HepG2 (cell line): ENCODE measurements at regions of chr6 and their contacts with region 1.

Region 1: DNA sequence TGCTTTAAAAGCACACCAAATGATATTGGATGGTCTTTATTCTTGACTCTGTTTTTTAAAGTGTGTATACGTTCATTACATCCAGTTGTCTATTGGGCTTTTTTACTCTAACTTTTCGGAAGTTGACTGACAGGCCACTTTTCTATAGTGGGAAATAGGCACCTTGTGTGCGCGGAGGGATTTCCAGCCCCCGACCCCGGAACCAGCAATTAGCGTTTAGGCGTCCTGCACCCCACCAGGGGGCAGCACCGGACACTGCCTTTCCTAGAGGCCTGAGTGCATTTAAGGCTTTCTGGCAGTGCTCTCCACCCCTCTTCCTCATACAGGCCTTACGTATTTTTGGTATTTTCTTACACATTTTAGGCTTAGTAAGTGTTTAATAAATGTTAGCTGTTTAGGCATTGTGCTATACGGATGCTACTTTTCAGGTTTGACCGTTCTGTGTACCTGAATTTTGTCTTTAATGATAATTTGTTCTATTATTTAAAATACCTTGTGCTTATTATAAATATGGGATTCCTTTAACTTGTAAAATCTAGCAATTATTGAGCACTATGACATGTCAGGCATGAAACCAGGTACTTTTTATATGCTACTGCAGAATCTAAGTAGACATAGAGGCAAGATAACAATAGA is 231.8 kb downstream of the BCKDHB start:
- DNase-seq: peak; percentile 47
- ATAC-seq: peak; percentile 92
- H3K4me3 ChIP-seq: no peak overlapping the region
- H3K27ac ChIP-seq: no peak overlapping the region
- H3K4me1 ChIP-seq: no peaks in the 10 kb centered on the region
- H3K27me3 ChIP-seq: no peaks in the 10 kb centered on the region
- CTCF ChIP-seq: peak; percentile 83
- EP300 ChIP-seq: no peak
- POLR2A ChIP-seq: no peak
- RAD21 ChIP-seq: peak; percentile 61; the same call in 1 of the 2 replicates

Region 2: DNA sequence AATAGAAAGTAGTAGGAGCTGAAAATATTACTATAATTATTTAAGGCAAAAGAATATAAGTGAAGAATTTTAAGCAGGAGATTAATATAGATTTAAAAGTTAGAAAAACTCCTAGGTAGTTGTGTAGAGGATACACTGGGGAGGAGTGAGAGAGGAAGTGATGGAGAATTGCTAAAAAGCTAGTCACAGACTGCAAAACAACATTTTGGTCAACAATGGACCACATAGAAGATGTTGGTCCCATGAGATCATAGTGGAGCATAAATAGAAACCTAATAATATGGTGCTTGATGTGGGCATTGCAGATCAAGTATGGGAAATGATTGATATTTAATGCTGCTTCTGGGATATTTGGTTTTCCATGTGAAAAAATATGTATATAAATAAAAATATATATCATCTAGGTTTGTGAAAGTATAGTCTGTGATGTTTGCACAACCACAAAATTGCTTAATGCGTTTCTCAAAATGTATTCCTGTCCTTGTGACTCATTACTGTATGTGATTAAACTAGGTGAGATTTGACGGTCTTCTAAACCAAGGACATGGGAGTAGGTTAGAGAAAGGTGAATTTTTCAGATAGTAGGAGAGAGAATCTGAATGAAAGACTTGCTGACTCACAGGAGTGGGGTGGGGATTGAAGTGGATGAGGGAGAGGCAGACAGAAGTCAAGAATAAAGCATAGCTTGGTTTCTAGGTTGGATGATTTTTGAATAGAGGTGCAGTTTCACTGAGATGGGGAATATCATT is 57.9 kb before region 1 on chr6:
- CTCF ChIA-PET with region 1: no interaction called
- POLR2A ChIA-PET with region 1: no interaction called
- in situ Hi-C with region 1: no loop called
- intact Hi-C with region 1: no loop called
- DNase-seq: no peak
- ATAC-seq: no peak
- H3K4me3 ChIP-seq: no peak overlapping the region
- H3K27ac ChIP-seq: no peak overlapping the region
- H3K4me1 ChIP-seq: no peaks in the 10 kb centered on the region
- H3K27me3 ChIP-seq: no peaks in the 10 kb centered on the region
- CTCF ChIP-seq: no peak
- EP300 ChIP-seq: no peak
- POLR2A ChIP-seq: no peak
- RAD21 ChIP-seq: no peak

Region 3: GRCh38 chr6:80477591-80477990 is 139.3 kb after region 1 on chr6:
- CTCF ChIA-PET with region 1: no interaction called
- POLR2A ChIA-PET with region 1: no interaction called
- in situ Hi-C with region 1: no loop called
- intact Hi-C with region 1: loop called (anchors 10 kb)
- DNase-seq: no peak
- ATAC-seq: no peak
- H3K4me3 ChIP-seq: no peak overlapping the region
- H3K27ac ChIP-seq: no peak overlapping the region
- H3K4me1 ChIP-seq: peaks cover 7% of the 10 kb centered on the region; the same call in 1 of the 2 replicates
- H3K27me3 ChIP-seq: no peaks in the 10 kb centered on the region
- CTCF ChIP-seq: no peak
- EP300 ChIP-seq: no peak
- POLR2A ChIP-seq: no peak
- RAD21 ChIP-seq: no peak

Region 4: DNA sequence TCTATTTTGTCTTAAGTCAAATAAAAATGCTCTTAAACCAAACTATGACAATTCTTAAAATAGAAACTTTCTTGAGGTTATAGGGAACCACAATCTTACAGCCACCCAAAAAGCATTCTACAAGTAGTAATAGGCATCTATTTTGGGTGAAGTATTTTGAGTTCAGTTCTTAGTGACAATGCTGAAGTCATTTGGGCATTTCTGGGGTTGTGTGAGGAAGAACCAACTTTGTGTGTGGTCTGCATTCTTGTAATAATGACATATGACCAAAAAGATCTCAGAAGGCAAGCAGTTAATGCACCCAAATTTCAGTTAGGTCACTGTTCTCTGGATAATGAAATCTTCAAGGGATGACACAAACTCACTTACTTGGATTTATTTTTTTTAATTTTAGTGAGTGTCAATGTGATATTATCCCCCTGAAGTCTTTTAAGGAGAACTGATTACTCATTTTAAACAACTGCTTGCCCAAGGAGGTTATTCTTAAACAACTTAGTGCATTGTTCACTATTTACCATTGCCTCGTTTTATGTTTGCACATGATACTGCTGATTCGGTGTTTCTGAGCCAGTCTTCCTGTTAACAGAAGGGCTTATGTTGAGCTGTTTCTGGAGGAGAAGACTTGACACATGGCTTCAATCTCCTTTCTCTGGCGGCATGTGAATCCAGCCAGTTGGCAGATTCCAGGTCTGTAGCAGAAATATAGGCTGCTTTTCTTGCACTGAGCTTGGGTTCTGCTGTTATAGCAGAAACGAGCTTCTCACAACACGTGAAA is 387.0 kb after region 1 on chr6:
- CTCF ChIA-PET with region 1: no interaction called
- POLR2A ChIA-PET with region 1: no interaction called
- in situ Hi-C with region 1: no loop called
- intact Hi-C with region 1: no loop called
- DNase-seq: no peak
- ATAC-seq: no peak
- H3K4me3 ChIP-seq: no peak overlapping the region
- H3K27ac ChIP-seq: no peak overlapping the region
- H3K4me1 ChIP-seq: no peaks in the 10 kb centered on the region
- H3K27me3 ChIP-seq: no peaks in the 10 kb centered on the region
- CTCF ChIP-seq: no peak
- EP300 ChIP-seq: no peak
- POLR2A ChIP-seq: no peak
- RAD21 ChIP-seq: no peak